ENCODE measurements at regions of chr16 and their contacts with region 1.

Region 1: DNA sequence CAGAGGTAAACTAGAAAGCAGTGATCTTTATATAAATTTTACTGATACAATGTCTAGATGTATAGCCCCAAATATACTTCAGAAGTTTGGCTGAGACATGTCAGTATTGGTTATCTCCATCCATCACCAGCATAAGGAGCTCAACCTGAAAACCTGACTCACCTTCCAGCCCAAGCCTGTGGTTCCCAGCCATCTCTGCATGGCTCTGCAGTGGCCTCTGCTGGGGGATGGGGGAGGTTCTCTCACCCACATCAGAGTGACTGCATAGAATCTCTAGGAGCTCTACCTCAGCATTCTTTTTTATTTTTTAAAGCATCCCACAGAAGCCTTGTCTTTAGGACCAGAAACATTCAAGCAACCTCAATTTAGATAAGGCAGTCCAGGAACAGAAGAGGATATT is 27.3 kb downstream of the USP7 start:
- DNase-seq: peak; percentile 92
- ATAC-seq: peak; percentile 100
- H3K4me3 Mint-ChIP-seq: no peak overlapping the region
- H3K27ac Mint-ChIP-seq: peak overlapping the region; percentile 78
- H3K4me1 Mint-ChIP-seq: peaks cover 81% of the 10 kb centered on the region
- H3K27me3 Mint-ChIP-seq: no peaks in the 10 kb centered on the region

Region 2: DNA sequence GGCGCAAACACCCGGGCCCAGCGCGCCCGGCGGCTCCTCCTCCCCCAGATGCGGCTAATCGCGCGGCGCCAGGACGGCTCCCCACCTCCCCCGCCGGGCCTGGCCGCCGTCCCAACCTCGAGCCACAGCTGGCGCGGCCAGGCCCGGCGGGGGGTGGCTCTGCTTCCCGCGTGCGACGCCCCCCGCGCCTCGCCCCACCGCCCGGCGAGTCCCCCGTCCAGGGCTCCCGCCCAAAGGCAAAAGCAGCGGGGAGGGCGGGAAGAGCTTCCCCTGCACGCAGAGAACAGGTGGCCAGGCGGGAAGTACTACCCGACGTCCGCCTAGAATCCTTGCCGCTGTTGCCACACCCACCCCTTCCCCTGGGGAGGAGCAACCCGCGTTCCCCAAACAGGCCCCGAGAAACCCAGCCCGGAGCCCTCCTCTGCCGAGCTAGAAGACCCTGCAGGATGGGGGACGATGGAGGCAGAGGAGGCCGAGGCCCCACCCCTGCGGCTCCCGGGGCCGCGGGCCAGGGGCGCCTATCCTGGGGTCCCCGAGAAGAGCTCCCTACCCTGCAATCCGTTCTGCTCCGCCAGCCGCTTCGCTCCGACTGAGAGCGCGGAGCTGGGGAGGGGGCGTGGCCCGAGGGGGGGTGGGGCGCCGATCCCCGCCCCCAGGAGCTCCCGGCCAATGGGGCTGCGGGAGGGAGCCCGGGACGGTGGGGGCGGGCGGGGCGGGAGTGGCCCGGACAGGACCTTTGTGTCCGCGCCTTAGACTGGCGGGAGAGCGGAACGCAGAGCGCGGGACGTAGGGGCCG is 67.8 kb before region 1 on chr16 and contains the start of gene CARHSP1:
- CTCF ChIA-PET with region 1: interaction called, 10 read pairs
- POLR2A ChIA-PET with region 1: interaction called, 7 read pairs
- intact Hi-C with region 1: loop called in 1 of 2 experiments (anchors 2 kb)
- DNase-seq: peak; percentile 92
- ATAC-seq: peak; percentile 72
- H3K4me3 Mint-ChIP-seq: peak within 1 kb of the TSS; percentile 87
- H3K27ac Mint-ChIP-seq: peak within 1 kb of the TSS; percentile 92
- H3K4me1 Mint-ChIP-seq: peaks cover 40% of the 10 kb centered on the region
- H3K27me3 Mint-ChIP-seq: no peaks in the 10 kb centered on the region
- total RNA-seq, gene CARHSP1: 49.4 to 64.5 TPM

Region 3: GRCh38 chr16:8905168-8905762 is 31.2 kb before region 1 on chr16:
- CTCF ChIA-PET with region 1: interaction called, 19 read pairs
- POLR2A ChIA-PET with region 1: no interaction called
- intact Hi-C with region 1: loop called (anchors 1 kb)
- DNase-seq: no peak
- ATAC-seq: peak; percentile 78
- H3K4me3 Mint-ChIP-seq: no peak overlapping the region
- H3K27ac Mint-ChIP-seq: peak overlapping the region; percentile 25
- H3K4me1 Mint-ChIP-seq: peaks cover 13% of the 10 kb centered on the region
- H3K27me3 Mint-ChIP-seq: no peaks in the 10 kb centered on the region

Region 4: DNA sequence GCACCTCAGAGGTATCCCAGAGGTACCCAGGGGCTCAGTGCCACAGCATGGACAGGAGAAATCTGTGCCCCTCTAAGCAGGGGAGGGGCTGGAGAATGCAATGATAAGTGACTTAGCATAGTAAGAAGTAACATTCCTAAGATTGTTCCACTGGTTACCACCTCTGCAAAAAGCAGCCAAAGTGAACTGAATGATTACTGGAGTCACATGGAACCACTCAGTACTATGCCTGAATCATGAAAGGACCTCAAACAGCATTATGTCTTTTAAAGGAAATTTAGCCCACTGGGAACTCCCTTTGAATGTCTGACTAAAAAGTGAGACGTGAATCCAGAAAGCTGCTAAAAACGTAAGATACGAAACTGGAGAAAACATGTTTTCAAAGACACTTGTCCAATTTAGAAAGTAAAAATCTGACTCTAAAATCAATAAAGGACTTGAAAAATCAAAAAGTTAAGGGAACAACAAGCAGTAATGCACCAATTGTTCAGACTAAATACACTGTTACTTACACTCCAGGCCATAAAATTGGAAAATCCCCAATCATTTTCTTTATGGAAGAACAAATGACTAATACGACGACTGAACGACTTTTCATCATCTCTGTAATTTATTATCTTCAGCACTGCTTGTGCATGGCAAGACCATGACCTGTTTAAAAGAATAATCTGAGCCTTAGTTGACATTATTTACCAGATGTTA is 15.6 kb before region 1 on chr16:
- CTCF ChIA-PET with region 1: interaction called, 19 read pairs
- POLR2A ChIA-PET with region 1: interaction called, 3 read pairs
- intact Hi-C with region 1: loop called (anchors 1 to 2 kb)
- DNase-seq: no peak
- ATAC-seq: peak; percentile 73
- H3K4me3 Mint-ChIP-seq: no peak overlapping the region
- H3K27ac Mint-ChIP-seq: peak overlapping the region; percentile 83
- H3K4me1 Mint-ChIP-seq: peaks cover 71% of the 10 kb centered on the region
- H3K27me3 Mint-ChIP-seq: no peaks in the 10 kb centered on the region

Region 5: GRCh38 chr16:9008601-9009260 is 72.3 kb after region 1 on chr16:
- CTCF ChIA-PET with region 1: interaction called, 8 read pairs
- POLR2A ChIA-PET with region 1: no interaction called
- intact Hi-C with region 1: loop called in 1 of 2 experiments (anchors 1 kb)
- DNase-seq: peak; percentile 84
- ATAC-seq: peak; percentile 96
- H3K4me3 Mint-ChIP-seq: no peak overlapping the region
- H3K27ac Mint-ChIP-seq: no peak overlapping the region
- H3K4me1 Mint-ChIP-seq: peaks cover 4% of the 10 kb centered on the region
- H3K27me3 Mint-ChIP-seq: peaks cover 10% of the 10 kb centered on the region

Region 6: DNA sequence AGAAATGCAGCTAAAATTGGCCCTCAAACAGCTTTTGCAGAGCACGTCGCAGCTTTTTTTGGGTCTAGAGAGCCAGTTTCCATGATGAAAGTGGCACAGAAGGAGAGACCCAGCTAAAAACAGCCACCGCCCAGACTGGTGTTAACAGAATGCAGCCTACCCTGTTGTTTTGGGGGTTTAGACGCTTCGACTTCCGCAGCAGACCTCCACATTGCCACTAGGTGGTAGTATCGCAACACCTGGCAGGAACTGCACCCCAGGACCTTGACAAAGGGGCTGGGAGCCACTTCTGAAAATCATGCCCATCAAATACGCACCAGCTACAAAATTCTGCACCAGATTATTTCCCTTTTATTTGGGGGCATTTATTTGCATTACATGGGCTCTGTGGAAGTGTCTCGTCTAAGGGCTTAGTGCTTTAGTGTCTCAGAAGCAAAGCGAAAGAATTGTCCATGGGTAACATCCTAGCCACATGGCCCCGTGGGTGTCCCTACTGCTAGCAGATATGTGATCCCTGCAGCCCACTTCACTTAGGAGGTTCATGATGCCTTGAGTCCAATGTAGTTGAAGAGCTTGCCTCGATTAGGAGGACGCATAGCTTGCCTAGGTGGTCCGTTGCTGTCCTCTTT is 322.1 kb after region 1 on chr16:
- CTCF ChIA-PET with region 1: no interaction called
- POLR2A ChIA-PET with region 1: no interaction called
- intact Hi-C with region 1: no loop called
- DNase-seq: peak; percentile 62
- ATAC-seq: peak; percentile 53
- H3K4me3 Mint-ChIP-seq: no peak overlapping the region
- H3K27ac Mint-ChIP-seq: no peak overlapping the region
- H3K4me1 Mint-ChIP-seq: no peaks in the 10 kb centered on the region
- H3K27me3 Mint-ChIP-seq: peaks cover 24% of the 10 kb centered on the region